AG04450 (cell line): ENCODE measurements at regions of chr17 and their contacts with region 1.

Region 1: GRCh38 chr17:39636927-39637736 is at the start of gene STARD3:
- DNase-seq: peak; percentile 44
- H3K4me3 ChIP-seq: peak within 1 kb of the TSS; percentile 92
- H3K27ac ChIP-seq: peak within 1 kb of the TSS; percentile 61
- H3K27me3 ChIP-seq: peaks cover 7% of the 10 kb centered on the region
- CTCF ChIP-seq: peak; percentile 17
- polyA plus RNA-seq, gene STARD3: 43.3 and 44.7 TPM in 2 replicates

Region 2: GRCh38 chr17:39668199-39668966 is 31.3 kb after region 1 on chr17 and contains the start of gene PNMT:
- CTCF ChIA-PET with region 1: interaction called, 10 read pairs
- POLR2A ChIA-PET with region 1: no interaction called
- DNase-seq: no peak
- H3K4me3 ChIP-seq: peak within 1 kb of the TSS; percentile 36; the same call in 1 of the 2 replicates
- H3K27ac ChIP-seq: no peak within 1 kb of the TSS
- H3K27me3 ChIP-seq: peaks cover 37% of the 10 kb centered on the region
- CTCF ChIP-seq: peak; percentile 70
- polyA plus RNA-seq, gene PNMT: not detected in 2 replicates